WTC11 (cell line): ENCODE measurements at regions of chr4 and their contacts with region 1.

Region 1: GRCh38 chr4:118888666-118889311 is at the start of gene SYNPO2:
- DNase-seq: peak; percentile 86
- ATAC-seq: peak; percentile 92
- H3K4me3 Mint-ChIP-seq: peak within 1 kb of the TSS; percentile 76
- H3K27ac Mint-ChIP-seq: peak within 1 kb of the TSS; percentile 95
- H3K4me1 Mint-ChIP-seq: peaks cover 26% of the 10 kb centered on the region
- H3K27me3 Mint-ChIP-seq: no peaks in the 10 kb centered on the region; the same call in 1 of the 2 replicates
- CTCF ChIP-seq: no peak
- total RNA-seq, gene SYNPO2: 1.5 to 1.9 TPM (median 1.6 TPM) in 3 replicates

Region 2: GRCh38 chr4:118772081-118772766 is 116.6 kb before region 1 on chr4:
- CTCF ChIA-PET with region 1: interaction called, 14 read pairs
- POLR2A ChIA-PET with region 1: interaction called, 4 read pairs
- DNase-seq: no peak
- ATAC-seq: peak; percentile 64
- H3K4me3 Mint-ChIP-seq: no peak overlapping the region
- H3K27ac Mint-ChIP-seq: no peak overlapping the region
- H3K4me1 Mint-ChIP-seq: peaks cover 25% of the 10 kb centered on the region
- H3K27me3 Mint-ChIP-seq: no peaks in the 10 kb centered on the region
- CTCF ChIP-seq: no peak; the same call in 1 of the 2 replicates

Region 3: DNA sequence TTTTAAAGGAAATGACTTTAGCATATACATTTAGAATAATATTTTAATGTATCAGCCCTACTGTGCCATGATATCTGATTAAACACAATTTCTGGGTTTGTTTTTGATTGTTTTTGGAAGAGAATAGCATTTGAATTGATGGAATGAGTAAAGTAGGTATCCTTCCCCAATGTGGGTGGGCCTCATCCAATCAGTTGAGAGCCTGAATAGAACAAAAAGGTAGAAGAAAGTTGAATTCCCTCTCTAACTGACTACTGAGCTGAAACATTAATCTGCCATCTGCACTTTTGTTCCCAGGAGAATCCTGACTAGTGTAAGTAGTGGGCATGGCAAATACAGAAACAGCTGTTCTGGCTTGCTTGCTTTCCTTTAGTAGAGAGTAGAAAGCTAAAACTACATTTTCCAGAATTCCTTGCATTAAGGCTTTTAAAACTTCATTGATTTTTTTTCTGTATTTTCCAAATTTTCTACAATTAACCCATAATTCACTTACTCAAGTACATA is 43.2 kb before region 1 on chr4:
- CTCF ChIA-PET with region 1: interaction called, 10 read pairs
- POLR2A ChIA-PET with region 1: interaction called, 3 read pairs
- DNase-seq: no peak
- ATAC-seq: no peak
- H3K4me3 Mint-ChIP-seq: no peak overlapping the region
- H3K27ac Mint-ChIP-seq: no peak overlapping the region
- H3K4me1 Mint-ChIP-seq: peaks cover 54% of the 10 kb centered on the region
- H3K27me3 Mint-ChIP-seq: no peaks in the 10 kb centered on the region
- CTCF ChIP-seq: no peak

Region 4: GRCh38 chr4:119087121-119087520 is 198.3 kb after region 1 on chr4:
- CTCF ChIA-PET with region 1: no interaction called
- POLR2A ChIA-PET with region 1: no interaction called
- DNase-seq: no peak
- ATAC-seq: no peak
- H3K4me3 Mint-ChIP-seq: no peak overlapping the region
- H3K27ac Mint-ChIP-seq: no peak overlapping the region
- H3K4me1 Mint-ChIP-seq: no peaks in the 10 kb centered on the region
- H3K27me3 Mint-ChIP-seq: no peaks in the 10 kb centered on the region
- CTCF ChIP-seq: no peak